ENCODE measurements at regions of chr19 and their contacts with region 1.

Region 1: DNA sequence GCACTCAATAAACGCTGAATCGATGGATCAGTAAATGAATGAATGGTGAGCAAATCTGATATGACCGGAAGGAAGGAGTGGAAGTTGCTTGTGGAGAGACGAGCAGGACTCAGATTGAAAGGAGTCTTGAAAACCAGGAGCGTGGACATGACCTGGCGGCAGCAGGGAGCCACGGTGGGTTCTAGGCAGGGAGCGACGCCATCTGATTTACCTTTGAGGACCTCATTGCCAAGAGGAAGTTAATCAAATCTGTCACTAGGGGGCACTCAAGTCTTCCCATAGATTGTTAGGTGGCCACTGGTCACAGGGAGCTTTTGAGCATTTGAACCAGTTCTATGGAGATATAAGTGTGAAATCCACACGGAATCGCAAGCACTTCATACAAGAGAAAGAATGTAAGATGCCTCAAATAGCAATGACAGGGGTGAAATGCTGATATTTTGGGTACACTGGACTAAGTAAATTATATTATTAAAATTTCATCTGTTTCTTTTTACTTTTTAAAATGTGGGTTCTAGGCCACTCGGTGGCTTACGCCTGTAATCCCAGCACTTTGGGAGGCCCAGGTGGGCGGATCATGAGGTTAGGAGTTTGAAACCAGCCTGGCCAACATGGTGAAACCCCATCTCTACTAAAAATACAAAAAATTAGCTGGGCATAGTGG is 9.2 kb upstream of the FBN3 start:
- DNase-seq: peak in 1 of 2 donors; percentile 72
- ATAC-seq: peak in 7 of 8 donors; percentile 46 to 73 (median 65)
- H3K4me3 ChIP-seq: no peak overlapping the region
- H3K27ac ChIP-seq: no peak overlapping the region
- H3K4me1 ChIP-seq: peaks cover 0 to 15% (median 10%) of the 10 kb centered on the region in 9 donors
- H3K27me3 ChIP-seq: no peaks in the 10 kb centered on the region
- CTCF ChIP-seq: peak; percentile 50 to 84 (median 76)

Region 2: GRCh38 chr19:7943444-7944176 is 214.9 kb before region 1 on chr19 and contains the start of gene TIMM44:
- intact Hi-C with region 1: loop called in 4 of 10 experiments (anchors 10 kb)
- DNase-seq: peak; percentile 98 to 99
- ATAC-seq: peak; percentile 98 to 99 (median 99)
- H3K4me3 ChIP-seq: peak within 1 kb of the TSS; percentile 67 to 99 (median 89)
- H3K27ac ChIP-seq: peak within 1 kb of the TSS; percentile 85 to 98 (median 96)
- H3K4me1 ChIP-seq: peaks cover 4 to 26% (median 13%) of the 10 kb centered on the region in 9 donors
- H3K27me3 ChIP-seq: no peaks in the 10 kb centered on the region
- CTCF ChIP-seq: no peak
- total RNA-seq, gene TIMM44: 54.9 to 97.5 (median 71.4) TPM

Region 3: GRCh38 chr19:7953060-7953459 is 205.5 kb before region 1 on chr19:
- intact Hi-C with region 1: loop called in 5 of 10 experiments (anchors 10 kb)
- DNase-seq: no peak
- ATAC-seq: no peak
- H3K4me3 ChIP-seq: no peak overlapping the region
- H3K27ac ChIP-seq: no peak overlapping the region
- H3K4me1 ChIP-seq: peaks cover 0 to 19% (median 8%) of the 10 kb centered on the region in 9 donors
- H3K27me3 ChIP-seq: no peaks in the 10 kb centered on the region
- CTCF ChIP-seq: no peak

Region 4: DNA sequence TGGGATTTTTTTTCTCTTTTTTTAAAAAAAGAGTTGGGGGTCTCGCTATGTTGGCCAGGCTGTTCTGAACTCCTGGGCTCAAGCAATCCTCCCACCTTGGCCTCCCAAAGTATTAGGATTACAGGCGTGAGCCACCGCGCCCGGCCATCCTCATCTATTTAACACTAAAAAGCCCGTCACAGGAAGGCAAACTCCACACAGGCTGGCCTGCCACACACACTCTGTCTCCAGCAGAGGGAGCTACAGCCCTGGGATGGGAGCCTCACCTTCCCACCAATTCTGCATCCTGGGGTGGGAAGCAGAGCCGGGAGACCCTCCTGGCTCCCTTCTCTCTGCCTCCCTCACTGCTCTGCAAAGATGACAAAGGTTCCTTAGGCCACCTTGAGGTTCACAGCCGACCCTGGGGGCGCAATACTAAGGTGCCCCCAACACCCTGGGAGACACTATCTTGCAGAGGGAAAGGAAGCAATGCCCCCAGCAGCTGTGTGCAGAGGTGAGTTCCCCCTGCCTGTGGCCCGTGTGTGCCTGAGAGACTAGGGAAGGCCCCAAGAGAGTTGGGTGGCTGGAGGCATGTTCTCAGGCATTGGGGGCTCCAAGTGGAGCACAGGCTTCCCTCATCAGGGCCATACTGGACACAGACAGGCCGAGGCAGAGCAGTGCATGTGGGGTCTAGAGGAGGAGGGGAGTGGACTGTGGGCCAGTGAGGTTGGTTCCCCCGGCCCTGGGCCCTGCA is 187.7 kb before region 1 on chr19:
- intact Hi-C with region 1: loop called in 3 of 10 experiments (anchors 10 kb)
- DNase-seq: no peak
- ATAC-seq: no peak
- H3K4me3 ChIP-seq: no peak overlapping the region
- H3K27ac ChIP-seq: no peak overlapping the region
- H3K4me1 ChIP-seq: peaks cover 0 to 26% (median 12%) of the 10 kb centered on the region in 9 donors
- H3K27me3 ChIP-seq: no peaks in the 10 kb centered on the region
- CTCF ChIP-seq: peak; percentile 53 to 78 (median 73)

Region 5: DNA sequence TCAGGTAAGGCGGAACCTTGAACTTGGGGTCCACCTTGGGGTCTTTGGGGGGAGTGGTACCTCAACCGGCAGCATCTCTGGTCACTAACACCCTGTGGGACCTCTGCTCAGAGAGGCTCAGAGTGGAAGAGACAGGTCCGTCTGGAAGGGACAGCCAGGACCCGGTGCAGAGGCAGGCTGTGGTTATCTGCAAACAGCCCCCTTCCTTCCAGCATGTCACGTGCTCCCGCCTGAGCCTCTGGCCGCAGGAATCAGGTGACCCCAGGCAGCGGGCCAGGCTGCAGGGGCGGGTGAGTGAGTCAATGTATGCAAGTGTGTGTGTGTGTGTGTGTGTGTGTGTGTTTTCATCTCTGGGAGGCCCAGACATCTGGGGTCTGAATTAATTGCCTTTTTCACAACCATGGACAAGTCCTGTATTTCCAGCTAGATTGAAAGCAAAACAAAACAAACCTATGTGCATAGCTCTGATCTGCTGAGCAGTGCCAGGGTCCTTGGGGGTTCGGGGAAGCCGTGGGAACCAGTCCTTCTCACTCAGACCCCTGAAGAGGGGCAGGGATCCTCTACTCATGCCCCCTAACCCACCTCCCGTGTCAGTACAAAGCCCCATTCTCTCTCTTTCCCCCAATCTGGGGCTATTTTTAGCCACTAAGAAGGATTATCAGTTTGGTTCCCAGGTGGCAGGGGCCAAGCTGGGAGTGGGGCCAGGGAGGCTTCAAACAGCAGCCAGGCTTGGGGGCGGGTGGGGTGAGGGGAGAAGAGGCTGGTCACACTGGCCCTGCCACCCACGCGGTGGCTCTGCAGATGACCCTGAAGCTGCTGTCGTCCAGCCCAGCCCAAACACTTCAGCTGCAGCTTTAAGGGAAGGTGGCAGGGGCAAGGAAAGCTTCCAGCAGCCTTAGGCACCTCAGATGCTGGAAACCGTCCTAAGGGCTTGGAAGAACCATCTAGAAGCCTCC is 82.0 kb after region 1 on chr19:
- intact Hi-C with region 1: loop called in 1 of 10 experiments (anchors 5 kb)
- DNase-seq: peak; percentile 85 to 91
- ATAC-seq: peak; percentile 85 to 92 (median 91)
- H3K4me3 ChIP-seq: peak overlapping the region in 5 of 10 donors; percentile 2 to 38 (median 29)
- H3K27ac ChIP-seq: peak overlapping the region; percentile 75 to 92 (median 86)
- H3K4me1 ChIP-seq: peaks cover 10 to 42% (median 29%) of the 10 kb centered on the region in 9 donors
- H3K27me3 ChIP-seq: no peaks in the 10 kb centered on the region
- CTCF ChIP-seq: no peak

Measured in heart right ventricle (tissue), 16 donors.